Lower leg skin (tissue), 4 donors: ENCODE measurements at regions of chr11 and their contacts with region 1.

Region 1: GRCh38 chr11:20321177-20321576 is 42.3 kb upstream of the HTATIP2 start:
- DNase-seq: no peak
- H3K4me3 ChIP-seq: no peak overlapping the region
- CTCF ChIP-seq: no peak
- POLR2A ChIP-seq: no peak

Region 2: DNA sequence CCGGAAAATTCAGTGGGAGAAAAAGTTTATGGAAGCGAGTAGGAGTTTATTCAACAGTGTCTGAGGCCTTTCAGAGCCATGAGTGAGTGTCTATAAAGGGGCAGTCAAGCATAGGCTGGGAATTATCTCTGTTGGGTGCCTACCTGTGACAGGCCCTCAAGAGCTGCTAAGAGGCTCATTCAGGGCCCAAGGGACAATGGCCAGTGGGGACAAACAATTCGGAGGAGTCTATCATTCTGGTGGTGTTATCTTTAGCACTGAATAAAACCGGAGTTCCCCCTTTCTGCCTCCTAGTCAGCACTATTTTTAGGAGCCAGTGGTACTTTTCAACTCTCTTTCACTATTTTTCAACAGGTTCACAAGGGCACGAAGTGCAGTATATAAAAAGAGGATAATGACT is 47.1 kb before region 1 on chr11:
- intact Hi-C with region 1: loop called (anchors 2 kb)
- DNase-seq: no peak
- H3K4me3 ChIP-seq: no peak overlapping the region
- CTCF ChIP-seq: no peak
- POLR2A ChIP-seq: no peak